Endothelial cell of umbilical vein (primary cell): ENCODE measurements at regions of chr17 and their contacts with region 1.

Region 1: GRCh38 chr17:6843241-6843880 is 11.8 kb upstream of the TEKT1 start:
- DNase-seq: peak; percentile 68
- H3K4me3 ChIP-seq: no peak overlapping the region
- H3K27ac ChIP-seq: no peak overlapping the region
- H3K4me1 ChIP-seq: no peaks in the 10 kb centered on the region
- H3K27me3 ChIP-seq: peaks cover 27 to 31% of the 10 kb centered on the region in 2 experiments
- CTCF ChIP-seq: peak; percentile 21 to 26
- POLR2A ChIP-seq: no peak

Region 2: DNA sequence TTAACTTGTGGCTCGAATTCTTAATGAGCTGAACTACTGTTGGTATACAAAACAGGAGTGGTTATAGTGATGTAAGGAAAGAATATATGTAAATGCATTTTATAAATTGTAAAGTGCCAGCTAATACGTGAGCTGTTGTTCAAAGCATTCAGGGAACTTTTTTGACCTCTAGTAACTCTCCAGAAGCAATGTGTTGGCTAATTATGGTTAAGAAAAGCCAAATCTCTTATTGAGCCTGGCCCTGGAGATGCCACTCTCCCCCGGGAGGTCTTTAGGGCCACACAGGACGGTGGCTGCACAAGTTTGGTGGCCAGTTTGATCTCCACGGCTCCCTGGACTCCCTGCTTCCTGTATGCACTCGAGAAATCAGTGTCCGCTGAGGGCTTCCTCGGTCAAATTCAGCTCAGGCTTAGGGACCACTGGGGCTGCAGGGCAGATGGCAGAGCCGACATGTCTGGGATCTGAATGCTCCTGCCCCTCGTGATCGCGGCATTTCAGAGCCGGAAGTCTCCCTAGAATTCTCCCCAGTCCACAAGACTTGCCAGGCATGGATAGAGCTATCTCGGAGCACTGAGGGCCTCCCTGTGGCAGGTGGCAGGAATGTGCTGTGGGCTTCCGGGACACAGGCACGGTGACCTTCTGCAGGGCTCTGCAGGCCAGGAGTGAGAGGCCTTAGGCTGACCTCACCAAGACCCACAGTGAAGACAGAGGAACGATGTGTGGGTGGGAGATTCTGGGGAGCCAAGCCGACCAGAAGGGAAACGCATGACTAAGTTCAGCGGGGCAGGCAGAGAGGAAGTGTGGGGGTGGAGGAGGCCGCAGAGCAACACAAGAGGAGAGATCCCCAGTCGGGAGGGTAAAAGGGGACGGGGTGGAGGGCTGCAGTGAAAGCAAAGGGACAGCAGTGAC is 268.4 kb before region 1 on chr17:
- CTCF ChIA-PET with region 1: no interaction called
- POLR2A ChIA-PET with region 1: no interaction called
- dilution Hi-C with region 1: no loop called
- intact Hi-C with region 1: no loop called
- DNase-seq: peak; percentile 69
- H3K4me3 ChIP-seq: no peak overlapping the region
- H3K27ac ChIP-seq: peak overlapping the region; percentile 19
- H3K4me1 ChIP-seq: peaks cover 14% of the 10 kb centered on the region
- H3K27me3 ChIP-seq: no peaks in the 10 kb centered on the region
- CTCF ChIP-seq: no peak
- POLR2A ChIP-seq: no peak

Region 3: GRCh38 chr17:6666077-6666521 is 177.3 kb before region 1 on chr17:
- CTCF ChIA-PET with region 1: interaction called, 61 read pairs
- POLR2A ChIA-PET with region 1: no interaction called
- dilution Hi-C with region 1: no loop called
- intact Hi-C with region 1: loop called (anchors 1 kb)
- DNase-seq: peak; percentile 82
- H3K4me3 ChIP-seq: no peak overlapping the region
- H3K27ac ChIP-seq: no peak overlapping the region
- H3K4me1 ChIP-seq: no peaks in the 10 kb centered on the region
- H3K27me3 ChIP-seq: peaks cover 7 to 11% of the 10 kb centered on the region in 2 experiments
- CTCF ChIP-seq: peak; percentile 85 to 86
- POLR2A ChIP-seq: no peak

Region 4: DNA sequence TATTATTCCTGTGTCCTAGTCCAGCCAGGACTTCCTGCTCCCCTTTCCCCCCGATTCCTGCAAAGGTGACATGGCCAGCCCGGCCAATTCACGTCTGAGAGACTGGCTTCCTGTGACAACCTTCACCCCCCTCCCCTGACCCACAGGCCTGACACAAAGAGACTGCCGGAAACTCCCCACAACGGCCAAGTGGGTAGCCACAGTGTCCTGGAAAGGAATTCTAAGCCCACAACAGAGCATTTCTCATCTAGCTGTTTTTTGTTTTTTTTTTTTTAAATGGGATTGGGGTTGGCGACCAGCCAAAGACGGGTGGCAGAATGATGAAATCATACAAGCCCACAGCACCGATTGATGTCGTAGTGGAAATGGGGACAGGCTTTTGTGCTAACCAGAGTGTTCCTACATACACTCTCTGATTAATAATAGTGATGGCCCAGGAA is 90.3 kb before region 1 on chr17:
- CTCF ChIA-PET with region 1: interaction called, 81 read pairs
- POLR2A ChIA-PET with region 1: no interaction called
- dilution Hi-C with region 1: no loop called
- intact Hi-C with region 1: no loop called
- DNase-seq: peak; percentile 87
- H3K4me3 ChIP-seq: peak overlapping the region in 1 of 3 experiments; percentile 13
- H3K27ac ChIP-seq: peak overlapping the region; percentile 96
- H3K4me1 ChIP-seq: peaks cover 36% of the 10 kb centered on the region
- H3K27me3 ChIP-seq: no peaks in the 10 kb centered on the region
- CTCF ChIP-seq: no peak
- POLR2A ChIP-seq: no peak

Region 5: DNA sequence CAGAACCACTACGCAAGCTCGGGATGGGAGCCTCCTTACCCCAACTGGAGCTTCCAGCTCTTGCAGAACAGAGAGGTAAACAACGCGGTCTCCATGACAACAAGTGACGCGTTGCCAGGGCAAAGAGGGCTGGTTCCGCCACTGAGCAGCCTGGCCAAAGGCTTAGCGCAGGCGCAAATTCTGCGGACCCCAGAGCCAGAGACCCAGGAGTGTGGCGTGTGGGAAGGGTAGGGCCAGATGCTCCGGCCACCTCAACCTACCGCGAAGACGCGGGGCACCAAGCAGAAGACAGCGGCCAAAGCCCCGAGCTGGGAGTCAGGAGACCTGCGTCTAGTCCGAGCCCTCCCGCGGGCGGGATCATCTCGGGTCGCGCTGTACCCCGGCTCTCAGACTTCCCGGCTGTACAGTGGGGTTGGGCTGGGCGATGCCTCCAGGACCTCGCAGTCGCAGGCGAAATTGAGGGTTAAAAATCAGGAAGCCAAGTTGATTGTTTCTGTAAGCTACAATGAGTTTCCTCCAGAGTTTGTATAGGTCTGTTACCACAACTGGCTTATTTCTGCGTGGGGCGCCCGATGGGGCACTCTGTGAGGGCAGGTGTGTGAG is 11.6 kb before region 1 on chr17 and contains the start of gene TEKT1:
- CTCF ChIA-PET with region 1: interaction called, 23 read pairs
- POLR2A ChIA-PET with region 1: no interaction called
- dilution Hi-C with region 1: no loop called
- intact Hi-C with region 1: no loop called
- DNase-seq: peak; percentile 67
- H3K4me3 ChIP-seq: peak within 1 kb of the TSS in 1 of 3 experiments; percentile 22
- H3K27ac ChIP-seq: no peak within 1 kb of the TSS
- H3K4me1 ChIP-seq: no peaks in the 10 kb centered on the region
- H3K27me3 ChIP-seq: peaks cover 37 to 67% of the 10 kb centered on the region in 2 experiments
- CTCF ChIP-seq: no peak
- POLR2A ChIP-seq: no peak
- total RNA-seq, gene TEKT1: not detected in 2 replicates

Region 6: GRCh38 chr17:6894206-6894528 is 50.8 kb after region 1 on chr17:
- CTCF ChIA-PET with region 1: interaction called, 30 read pairs
- POLR2A ChIA-PET with region 1: no interaction called
- dilution Hi-C with region 1: no loop called
- intact Hi-C with region 1: no loop called
- DNase-seq: peak; percentile 28
- H3K4me3 ChIP-seq: no peak overlapping the region
- H3K27ac ChIP-seq: no peak overlapping the region
- H3K4me1 ChIP-seq: no peaks in the 10 kb centered on the region
- H3K27me3 ChIP-seq: peaks cover 56 to 62% of the 10 kb centered on the region in 2 experiments
- CTCF ChIP-seq: peak; percentile 46 to 71
- POLR2A ChIP-seq: no peak

Region 7: DNA sequence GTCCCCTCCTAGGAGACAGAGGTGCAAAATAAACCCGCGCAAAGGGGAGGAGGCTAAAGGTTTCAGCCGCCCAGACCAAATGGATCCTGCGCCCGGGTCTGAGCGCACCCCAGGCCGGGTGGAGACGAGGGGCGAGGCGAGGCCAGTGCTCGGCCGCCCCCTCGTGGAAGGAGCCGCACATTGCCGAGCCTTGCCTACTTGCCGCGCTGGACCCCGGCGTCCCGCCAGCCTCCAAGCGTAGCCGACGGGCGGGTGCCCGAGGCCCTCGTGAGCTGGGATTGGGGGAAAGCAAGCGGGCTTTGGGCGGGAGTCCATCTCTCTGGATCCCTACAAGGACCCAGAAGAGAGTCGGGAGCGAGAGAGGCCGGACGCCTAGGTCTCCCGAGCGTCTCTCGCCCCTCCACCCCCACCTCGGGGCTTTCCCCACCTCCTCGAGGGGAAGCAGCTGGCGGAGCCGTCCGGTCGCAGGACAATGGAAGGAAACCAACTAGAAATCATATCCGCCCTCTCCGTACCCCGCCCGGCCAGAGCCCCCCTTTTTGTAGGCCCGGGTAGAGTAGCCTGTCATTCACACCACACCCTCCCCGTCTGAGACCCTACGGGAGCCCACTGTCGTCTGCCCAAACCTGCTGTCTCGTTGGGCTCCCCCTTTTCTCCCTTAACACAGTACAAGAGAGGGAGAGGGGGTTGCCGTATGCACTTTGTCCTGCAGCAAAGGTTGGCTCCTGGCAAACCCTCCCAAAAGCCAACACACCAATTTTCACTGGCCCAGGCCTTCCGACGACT is 178.8 kb after region 1 on chr17:
- CTCF ChIA-PET with region 1: interaction called, 12 read pairs
- POLR2A ChIA-PET with region 1: no interaction called
- dilution Hi-C with region 1: no loop called
- intact Hi-C with region 1: loop called (anchors 1 kb)
- DNase-seq: peak; percentile 97
- H3K4me3 ChIP-seq: peak overlapping the region in 2 of 3 experiments; percentile 59 to 90
- H3K27ac ChIP-seq: peak overlapping the region; percentile 96
- H3K4me1 ChIP-seq: peaks cover 58% of the 10 kb centered on the region
- H3K27me3 ChIP-seq: no peaks in the 10 kb centered on the region
- CTCF ChIP-seq: peak; percentile 97 to 99
- POLR2A ChIP-seq: peak; percentile 66